ENCODE measurements at regions of chr2 and their contacts with region 1.

Region 1: GRCh38 chr2:96856776-96857673 is 791 bp downstream of the ANKRD39 start:
- DNase-seq: peak in 5 of 10 donors; percentile 21 to 72 (median 39)
- ATAC-seq: peak in 1 of 2 donors; percentile 2
- H3K4me3 Mint-ChIP-seq: peak overlapping the region; percentile 72 to 92 (median 90)
- H3K27ac Mint-ChIP-seq: peak overlapping the region; percentile 57 to 94 (median 84)
- H3K4me1 Mint-ChIP-seq: peaks cover 23 to 48% (median 46%) of the 10 kb centered on the region in 4 donors
- H3K27me3 Mint-ChIP-seq: no peaks in the 10 kb centered on the region

Region 2: GRCh38 chr2:96816128-96816835 is 40.7 kb before region 1 on chr2 and contains the start of gene CNNM3:
- POLR2A ChIA-PET with region 1: interaction called, 19 read pairs
- DNase-seq: peak; percentile 88 to 96 (median 94)
- ATAC-seq: peak; percentile 90 to 93
- H3K4me3 Mint-ChIP-seq: peak within 1 kb of the TSS; percentile 84 to 98 (median 89)
- H3K27ac Mint-ChIP-seq: peak within 1 kb of the TSS in 9 of 10 donors; percentile 78 to 94 (median 85)
- H3K4me1 Mint-ChIP-seq: peaks cover 36 to 58% (median 56%) of the 10 kb centered on the region in 4 donors
- H3K27me3 Mint-ChIP-seq: no peaks in the 10 kb centered on the region
- polyA plus RNA-seq, gene CNNM3: 2.8 to 12.0 (median 11.4) TPM

Region 3: DNA sequence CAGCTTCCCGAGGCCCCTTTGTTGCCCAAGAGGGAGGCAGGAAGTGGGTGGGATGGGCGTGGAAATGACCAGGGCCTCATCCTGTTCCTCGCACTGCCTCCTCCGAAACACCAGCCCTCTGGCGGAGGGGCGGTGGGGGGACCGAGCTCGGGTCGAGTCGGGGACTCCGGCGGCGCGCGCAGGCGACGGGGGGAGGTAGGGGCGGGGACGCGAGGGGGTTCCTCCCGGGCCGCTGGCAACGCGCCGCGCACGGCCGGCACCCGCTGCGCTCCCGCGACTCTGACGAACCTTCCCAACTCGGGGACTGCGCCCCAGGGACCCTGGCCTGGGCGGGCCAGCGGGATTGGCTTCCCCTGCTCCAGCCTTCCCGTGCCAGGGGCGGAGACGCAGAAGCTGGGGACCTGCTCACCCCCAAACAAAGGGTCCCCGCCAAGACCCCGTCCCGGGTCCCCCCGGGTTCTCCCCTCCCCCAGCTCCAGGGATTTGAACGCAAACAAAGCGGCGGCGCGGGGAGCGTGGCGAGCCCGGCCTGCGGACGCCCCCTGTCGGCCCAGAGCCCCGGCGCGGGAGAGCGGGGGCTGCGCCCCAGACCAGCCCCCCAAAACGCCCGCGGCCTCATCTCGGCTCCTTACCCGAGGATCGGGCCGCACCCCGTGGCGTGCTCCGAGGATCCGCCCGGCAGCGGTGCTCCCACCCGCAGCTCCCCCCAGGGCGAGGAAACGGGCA is 11.7 kb after region 1 on chr2:
- POLR2A ChIA-PET with region 1: interaction called, 61 read pairs
- DNase-seq: peak; percentile 43 to 82 (median 56)
- ATAC-seq: peak; percentile 25 to 37
- H3K4me3 Mint-ChIP-seq: peak overlapping the region; percentile 81 to 93 (median 86)
- H3K27ac Mint-ChIP-seq: peak overlapping the region in 7 of 10 donors; percentile 79 to 89 (median 87)
- H3K4me1 Mint-ChIP-seq: peaks cover 16 to 47% (median 39%) of the 10 kb centered on the region in 4 donors
- H3K27me3 Mint-ChIP-seq: no peaks in the 10 kb centered on the region

Region 4: DNA sequence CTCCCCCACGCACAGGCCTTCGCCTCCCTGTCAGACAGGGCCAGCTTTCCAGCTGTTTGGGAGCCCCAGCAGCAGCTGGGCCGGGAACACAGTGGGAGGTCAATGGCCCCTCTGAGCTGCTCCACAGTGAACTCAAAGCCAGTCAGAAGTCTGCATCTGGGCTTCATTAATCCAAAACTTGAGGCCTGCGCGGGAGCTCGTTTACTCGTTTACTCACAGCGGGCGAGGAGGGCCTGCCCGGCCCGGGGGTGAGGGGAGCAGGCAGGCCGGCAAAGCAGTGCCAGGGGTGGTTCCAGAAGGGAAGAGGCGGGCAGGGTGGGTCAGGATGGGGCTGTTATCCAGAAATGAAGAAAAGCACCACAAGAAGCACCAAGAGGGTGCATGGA is 49.7 kb after region 1 on chr2:
- POLR2A ChIA-PET with region 1: no interaction called
- DNase-seq: no peak
- ATAC-seq: no peak
- H3K4me3 Mint-ChIP-seq: no peak overlapping the region
- H3K27ac Mint-ChIP-seq: peak overlapping the region in 1 of 10 donors; percentile 35
- H3K4me1 Mint-ChIP-seq: peaks cover 21 to 30% (median 26%) of the 10 kb centered on the region in 4 donors
- H3K27me3 Mint-ChIP-seq: no peaks in the 10 kb centered on the region

Region 5: DNA sequence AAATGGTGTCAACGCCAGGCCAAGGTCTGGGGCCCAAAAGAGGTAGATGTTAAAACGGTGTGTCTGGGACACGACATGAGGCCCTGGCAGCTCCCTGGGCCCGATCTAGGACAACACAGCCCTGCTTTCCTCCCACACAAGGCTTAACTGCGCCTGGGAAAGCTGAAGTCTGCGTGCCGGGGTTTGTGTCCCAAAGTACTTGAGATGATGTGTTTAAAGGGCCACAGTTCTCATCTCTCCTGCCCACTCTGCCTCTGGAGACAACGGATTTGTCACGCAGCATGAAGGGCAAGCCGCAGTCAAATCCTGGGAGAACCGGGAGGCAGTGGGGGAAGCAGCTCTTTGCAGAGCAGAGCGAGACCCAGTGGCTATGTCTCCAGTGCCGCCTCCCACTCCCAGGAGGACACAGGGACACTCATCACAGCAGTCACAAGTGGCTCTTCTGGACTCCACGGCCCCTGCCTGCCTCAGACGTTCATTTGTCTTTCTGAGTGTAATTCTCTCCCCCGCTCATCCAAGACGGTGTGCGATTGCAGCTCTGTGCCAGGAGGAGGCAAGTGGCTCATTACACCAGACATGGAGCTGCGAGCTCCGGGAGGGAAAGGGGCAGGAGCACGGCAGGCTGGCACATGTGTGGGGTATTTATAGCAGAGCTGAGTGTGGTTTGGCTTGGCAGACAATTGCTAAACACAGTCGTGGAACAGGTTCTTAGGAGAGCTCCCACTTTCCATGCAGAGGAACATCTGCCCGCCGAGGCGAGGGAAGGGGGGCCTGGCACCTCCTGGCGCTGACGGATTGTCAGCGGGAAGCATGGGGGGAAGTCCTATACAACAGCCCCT is 70.6 kb after region 1 on chr2:
- POLR2A ChIA-PET with region 1: interaction called, 31 read pairs
- DNase-seq: no peak
- ATAC-seq: no peak
- H3K4me3 Mint-ChIP-seq: no peak overlapping the region
- H3K27ac Mint-ChIP-seq: peak overlapping the region in 2 of 10 donors; percentile 7 to 27
- H3K4me1 Mint-ChIP-seq: peaks cover 20 to 47% (median 29%) of the 10 kb centered on the region in 4 donors
- H3K27me3 Mint-ChIP-seq: peaks cover 0 to 1% (median 0%) of the 10 kb centered on the region in 5 donors

Region 6: DNA sequence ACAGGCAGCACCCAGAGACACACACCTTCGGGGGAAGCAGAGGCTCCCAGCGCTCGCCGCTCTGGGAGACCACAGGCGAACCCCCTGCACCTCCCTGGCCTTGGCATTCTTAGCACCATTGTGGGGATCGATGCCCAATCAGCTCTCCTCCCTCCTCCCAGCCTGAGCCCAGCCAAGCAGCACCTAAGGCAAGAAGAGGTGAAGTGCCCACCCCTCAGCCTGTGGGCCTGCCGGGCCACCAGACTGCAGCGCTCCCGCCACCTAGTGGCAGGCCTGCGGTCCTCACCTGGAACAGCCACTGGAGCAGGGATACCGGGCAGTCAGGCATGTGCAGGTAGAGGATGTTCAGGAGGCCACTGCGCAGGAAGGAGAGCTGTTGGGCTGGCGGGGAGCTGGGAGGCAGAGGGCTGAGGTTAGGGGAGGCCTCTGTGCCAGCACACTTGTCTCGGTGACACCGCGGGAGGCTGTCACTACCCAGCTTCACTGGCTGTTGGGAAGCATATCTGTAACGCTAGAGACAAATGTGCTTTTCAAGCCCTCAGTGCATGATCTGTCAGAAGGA is 94.1 kb after region 1 on chr2:
- POLR2A ChIA-PET with region 1: interaction called, 75 read pairs
- DNase-seq: peak; percentile 63 to 89 (median 74)
- ATAC-seq: peak; percentile 98 to 100
- H3K4me3 Mint-ChIP-seq: peak overlapping the region in 2 of 10 donors; percentile 41 to 62
- H3K27ac Mint-ChIP-seq: peak overlapping the region in 5 of 10 donors; percentile 15 to 87 (median 38)
- H3K4me1 Mint-ChIP-seq: peaks cover 10 to 30% (median 26%) of the 10 kb centered on the region in 4 donors
- H3K27me3 Mint-ChIP-seq: no peaks in the 10 kb centered on the region

Measured in naive thymus-derived CD8-positive, alpha-beta T cell (primary cell).